ENCODE measurements at regions of chr17 and their contacts with region 1.

Region 1: GRCh38 chr17:70168977-70169708 is at the start of gene KCNJ2:
- DNase-seq: peak; percentile 46
- total RNA-seq, gene KCNJ2: 72.6 and 103 TPM in 2 replicates

Region 2: GRCh38 chr17:69733171-69734012 is 435.8 kb before region 1 on chr17:
- in situ Hi-C with region 1: loop called (anchors 25 kb)
- DNase-seq: peak; percentile 84

Measured in G401 (cell line).